ENCODE measurements at regions of chr20 and their contacts with region 1.

Region 1: DNA sequence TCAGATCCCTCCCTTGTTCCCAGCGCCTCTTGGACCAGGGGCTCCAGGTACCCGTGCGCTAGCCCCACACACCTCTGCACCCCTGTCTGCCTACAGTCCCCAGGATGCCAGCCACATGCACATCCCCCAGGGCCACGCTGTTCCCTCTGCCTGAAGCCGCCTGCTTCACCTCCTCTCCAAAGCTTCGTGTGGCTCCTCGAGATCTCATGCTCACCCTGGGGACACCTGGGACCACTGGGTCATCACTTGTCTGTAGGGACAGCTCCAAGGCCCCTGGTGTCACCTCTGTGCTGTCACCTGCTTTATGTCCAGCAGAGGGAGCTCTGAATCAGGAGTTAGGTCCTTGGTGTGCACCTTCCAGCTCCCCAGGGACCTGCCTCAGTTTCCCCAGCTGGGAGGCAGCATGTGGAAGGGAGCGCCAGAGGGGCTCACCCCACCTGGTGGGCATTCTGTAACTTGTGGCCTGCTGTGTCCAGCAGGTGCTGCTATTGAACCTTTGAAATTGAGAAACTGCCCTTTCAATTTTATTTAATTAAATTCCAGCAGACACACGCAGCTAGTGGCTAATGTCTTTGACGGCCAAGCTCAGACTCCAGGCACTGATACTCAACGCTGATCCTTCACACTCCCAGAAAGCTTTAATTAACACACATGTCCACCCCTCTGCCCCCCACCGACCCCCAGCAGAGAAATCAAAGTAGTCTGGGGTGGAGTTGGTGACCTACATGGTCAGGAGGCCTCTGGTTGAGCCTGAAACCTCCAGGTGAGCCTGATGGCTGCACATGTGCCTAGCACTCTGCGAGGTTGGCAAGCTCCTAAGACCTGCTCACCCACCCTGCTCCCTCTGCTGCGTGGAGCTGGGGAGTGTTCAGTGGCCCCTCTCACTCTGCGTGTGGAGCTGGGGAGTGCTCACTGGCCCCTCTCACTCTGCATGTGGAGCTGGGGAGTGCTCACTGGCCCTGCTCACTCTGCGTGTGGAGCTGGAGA is 7.6 kb upstream of the YTHDF1 start:
- DNase-seq: peak in 8 of 9 donors; percentile 22 to 60 (median 36)
- ATAC-seq: peak; percentile 66
- H3K4me3 ChIP-seq: no peak overlapping the region
- H3K4me3 Mint-ChIP-seq: no peak overlapping the region
- H3K27ac ChIP-seq: no peak overlapping the region
- H3K27ac Mint-ChIP-seq: no peak overlapping the region
- H3K4me1 ChIP-seq: no peaks in the 10 kb centered on the region
- H3K4me1 Mint-ChIP-seq: peaks cover 0 to 6% (median 0%) of the 10 kb centered on the region in 7 donors
- H3K27me3 ChIP-seq: no peaks in the 10 kb centered on the region
- H3K27me3 Mint-ChIP-seq: peaks cover 0 to 12% (median 0%) of the 10 kb centered on the region in 5 donors

Region 2: DNA sequence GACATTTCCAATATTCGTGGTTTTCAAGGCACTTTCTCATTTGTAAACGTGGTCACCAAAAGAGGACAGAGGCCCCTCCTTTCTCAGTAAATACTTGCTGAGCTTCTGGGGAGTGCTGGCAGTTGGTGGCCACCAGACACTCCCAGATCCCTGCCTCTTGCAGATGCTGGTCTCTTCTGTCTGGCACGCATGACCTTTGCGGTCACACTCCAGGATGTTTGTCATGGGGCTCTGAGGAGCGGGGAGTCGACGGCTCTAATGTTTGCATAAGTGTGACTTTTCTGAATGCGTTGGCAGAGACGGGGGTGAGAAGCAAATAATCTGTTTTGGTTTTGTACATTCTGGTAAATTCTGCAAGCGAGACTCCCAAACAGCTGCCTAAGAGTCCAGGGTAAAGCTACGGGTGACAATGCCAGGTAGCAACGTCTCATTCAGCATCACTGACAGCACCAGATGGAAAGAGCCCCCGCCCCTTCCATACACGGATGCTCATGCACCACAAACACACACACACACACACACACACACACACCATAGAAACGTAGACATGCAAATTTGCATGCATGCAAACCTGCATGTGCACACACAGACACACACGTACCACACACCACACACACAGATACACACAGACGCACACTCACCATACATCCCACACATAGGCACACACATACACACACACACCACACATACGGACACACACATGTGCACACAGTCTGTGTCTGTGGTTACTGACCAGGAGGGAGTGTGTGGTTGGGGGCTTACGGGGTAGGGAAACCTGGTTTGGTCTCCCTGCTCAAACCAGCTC is 108.6 kb before region 1 on chr20:
- CTCF ChIA-PET with region 1: no interaction called
- POLR2A ChIA-PET with region 1: no interaction called
- intact Hi-C with region 1: no loop called
- DNase-seq: no peak
- ATAC-seq: no peak
- H3K4me3 ChIP-seq: no peak overlapping the region
- H3K4me3 Mint-ChIP-seq: no peak overlapping the region
- H3K27ac ChIP-seq: no peak overlapping the region
- H3K27ac Mint-ChIP-seq: no peak overlapping the region
- H3K4me1 ChIP-seq: no peaks in the 10 kb centered on the region
- H3K4me1 Mint-ChIP-seq: peaks cover 0 to 1% (median 0%) of the 10 kb centered on the region in 7 donors
- H3K27me3 ChIP-seq: peaks cover 0 to 3% of the 10 kb centered on the region in 2 donors
- H3K27me3 Mint-ChIP-seq: peaks cover 0 to 56% (median 38%) of the 10 kb centered on the region in 5 donors

Region 3: DNA sequence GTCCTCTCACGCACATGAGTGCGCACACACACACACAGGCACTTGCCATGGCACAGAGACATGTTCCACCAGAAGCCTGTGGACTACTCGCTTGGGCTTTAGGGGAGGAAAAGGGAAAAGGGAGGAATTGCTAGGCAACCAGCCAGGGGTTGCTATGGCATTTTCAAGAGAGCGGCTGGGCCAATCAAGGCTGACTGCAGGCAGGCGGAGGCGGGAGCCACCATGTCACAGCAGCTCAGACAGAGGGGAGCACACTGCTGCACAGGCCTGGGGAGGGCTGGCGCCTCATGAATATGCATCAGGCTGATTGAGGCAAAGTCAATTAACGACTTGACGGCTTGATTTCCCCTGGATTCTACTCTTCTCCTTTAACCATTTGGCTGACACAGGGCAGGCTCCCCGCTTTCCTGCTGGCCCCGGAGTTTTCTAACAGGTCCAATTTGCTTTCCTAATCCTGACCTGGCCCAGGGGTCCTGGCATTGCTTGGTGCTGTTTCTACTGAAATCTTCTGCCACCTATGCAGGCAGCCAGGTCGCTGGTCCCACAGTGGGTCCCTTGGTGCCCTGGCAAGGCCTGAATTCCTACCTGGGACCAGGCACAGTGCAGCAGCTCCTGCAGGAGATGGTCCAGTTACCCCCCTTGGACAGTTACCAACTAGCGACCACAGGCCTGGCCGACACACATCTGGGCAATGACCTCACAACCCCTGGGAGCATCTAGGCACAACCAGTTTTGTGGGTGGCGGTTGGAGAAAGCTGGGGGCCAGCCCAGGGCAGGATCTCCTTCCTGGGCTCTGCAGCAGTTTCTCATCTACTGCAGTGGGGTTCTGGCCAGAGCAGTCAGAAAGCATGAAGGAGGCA is 59.7 kb before region 1 on chr20:
- CTCF ChIA-PET with region 1: no interaction called
- POLR2A ChIA-PET with region 1: no interaction called
- intact Hi-C with region 1: no loop called
- DNase-seq: no peak
- ATAC-seq: no peak
- H3K4me3 ChIP-seq: no peak overlapping the region
- H3K4me3 Mint-ChIP-seq: no peak overlapping the region
- H3K27ac ChIP-seq: no peak overlapping the region
- H3K27ac Mint-ChIP-seq: no peak overlapping the region
- H3K4me1 ChIP-seq: no peaks in the 10 kb centered on the region
- H3K4me1 Mint-ChIP-seq: peaks cover 0 to 4% (median 4%) of the 10 kb centered on the region in 7 donors
- H3K27me3 ChIP-seq: no peaks in the 10 kb centered on the region
- H3K27me3 Mint-ChIP-seq: peaks cover 0 to 7% (median 4%) of the 10 kb centered on the region in 5 donors

Region 4: DNA sequence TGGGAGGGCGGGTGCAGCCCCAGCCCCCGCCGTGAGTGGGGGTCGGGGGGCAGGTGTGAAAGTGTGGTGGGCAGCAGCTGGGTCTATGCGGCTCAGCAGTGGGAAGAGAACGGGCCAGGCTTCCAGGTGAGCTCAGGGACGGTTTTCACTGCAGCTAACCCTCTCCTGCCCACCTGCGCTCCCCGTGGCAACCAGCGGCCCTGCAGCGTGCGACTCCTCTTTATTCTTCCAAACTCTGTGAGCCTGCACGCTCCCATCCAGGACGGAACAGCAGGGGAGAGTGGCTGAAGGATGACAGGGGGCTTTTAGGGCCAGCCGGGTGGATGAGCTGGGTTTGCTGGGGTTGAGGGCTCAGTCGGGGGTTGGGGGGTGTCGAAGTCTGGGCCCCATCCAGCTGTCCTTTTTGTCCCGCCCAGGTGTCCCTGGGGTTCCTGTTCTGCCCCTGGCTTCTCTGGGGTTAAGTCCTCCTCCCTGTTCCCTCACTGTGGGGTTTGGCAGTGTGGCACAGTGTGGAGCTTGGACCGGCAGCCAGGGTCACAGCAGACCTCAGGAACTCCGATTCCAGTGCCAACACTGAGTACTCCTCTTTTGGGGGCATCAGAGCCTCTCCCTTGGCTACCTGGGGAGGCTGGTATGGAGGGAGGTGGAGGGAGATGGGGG is 11.4 kb after region 1 on chr20:
- CTCF ChIA-PET with region 1: interaction called, 31 read pairs
- POLR2A ChIA-PET with region 1: no interaction called
- intact Hi-C with region 1: no loop called
- DNase-seq: peak in 4 of 9 donors; percentile 18 to 37 (median 32)
- ATAC-seq: no peak
- H3K4me3 ChIP-seq: no peak overlapping the region
- H3K4me3 Mint-ChIP-seq: peak overlapping the region in 4 of 10 donors; percentile 38 to 71 (median 56)
- H3K27ac ChIP-seq: no peak overlapping the region
- H3K27ac Mint-ChIP-seq: peak overlapping the region in 4 of 9 donors; percentile 28 to 79 (median 66)
- H3K4me1 ChIP-seq: peaks cover 0 to 4% of the 10 kb centered on the region in 2 donors
- H3K4me1 Mint-ChIP-seq: peaks cover 0 to 13% (median 5%) of the 10 kb centered on the region in 7 donors
- H3K27me3 ChIP-seq: no peaks in the 10 kb centered on the region
- H3K27me3 Mint-ChIP-seq: peaks cover 17 to 31% (median 25%) of the 10 kb centered on the region in 5 donors

Region 5: DNA sequence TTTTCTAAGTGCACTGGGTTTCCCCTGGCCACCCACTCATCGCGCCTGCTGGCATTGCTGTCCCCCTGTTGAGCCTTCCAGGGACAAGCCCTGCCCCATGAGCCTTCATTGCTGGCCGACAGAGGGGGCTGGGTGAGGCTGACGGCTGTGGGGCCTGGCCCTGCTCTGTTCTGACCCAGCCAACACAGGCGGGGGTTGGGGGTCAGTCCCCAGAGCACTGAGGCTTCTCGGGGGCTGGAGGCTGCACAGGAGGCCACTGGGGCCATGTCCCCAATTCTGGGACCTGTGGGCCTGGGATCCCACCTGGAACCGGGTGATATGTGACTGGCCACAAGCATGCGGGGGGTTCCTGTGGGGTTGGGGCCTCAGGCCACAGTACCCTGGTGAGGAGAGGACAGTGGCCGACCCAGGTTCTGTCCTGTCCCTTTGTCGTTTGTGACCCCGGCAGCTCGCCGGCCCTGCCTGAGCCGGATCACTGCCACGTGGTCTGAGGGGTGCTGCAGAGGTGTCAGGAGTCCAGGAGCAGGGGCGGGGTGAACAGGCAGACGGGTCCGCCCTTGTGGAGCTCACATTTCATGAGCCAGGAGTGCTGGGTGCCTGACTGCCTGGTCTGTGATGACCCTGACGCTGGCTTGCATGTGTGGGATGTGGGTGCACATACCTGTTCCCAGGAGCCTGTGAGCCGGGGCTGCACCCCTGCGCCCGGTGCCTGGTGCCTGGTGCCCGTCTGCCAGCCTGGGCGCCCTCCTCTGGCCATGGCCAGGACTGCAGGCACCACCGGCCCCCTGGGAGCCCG is 67.4 kb after region 1 on chr20:
- CTCF ChIA-PET with region 1: interaction called, 4 read pairs
- POLR2A ChIA-PET with region 1: no interaction called
- intact Hi-C with region 1: loop called in 1 of 2 experiments (anchors 1 kb)
- DNase-seq: peak in 8 of 9 donors; percentile 30 to 76 (median 57)
- ATAC-seq: peak; percentile 73
- H3K4me3 ChIP-seq: no peak overlapping the region
- H3K4me3 Mint-ChIP-seq: no peak overlapping the region
- H3K27ac ChIP-seq: no peak overlapping the region
- H3K27ac Mint-ChIP-seq: no peak overlapping the region
- H3K4me1 ChIP-seq: peaks cover 0 to 4% of the 10 kb centered on the region in 2 donors
- H3K4me1 Mint-ChIP-seq: peaks cover 6 to 13% (median 8%) of the 10 kb centered on the region in 7 donors
- H3K27me3 ChIP-seq: no peaks in the 10 kb centered on the region
- H3K27me3 Mint-ChIP-seq: peaks cover 0 to 7% (median 0%) of the 10 kb centered on the region in 5 donors